ENCODE measurements at regions of chr12 and their contacts with region 1.

Region 1: GRCh38 chr12:11836282-11837151 is 187.0 kb downstream of the ETV6 start:
- DNase-seq: peak; percentile 93
- ATAC-seq: peak; percentile 96
- H3K4me3 ChIP-seq: peak overlapping the region in 2 of 5 experiments; percentile 6 to 37
- H3K4me3 Mint-ChIP-seq: peak overlapping the region; percentile 64
- H3K27ac ChIP-seq: peak overlapping the region; percentile 74 to 77
- H3K27ac Mint-ChIP-seq: peak overlapping the region; percentile 92
- H3K4me1 ChIP-seq: peaks cover 37 to 53% of the 10 kb centered on the region in 2 donors
- H3K4me1 Mint-ChIP-seq: peaks cover 67% of the 10 kb centered on the region
- H3K27me3 ChIP-seq: no peaks in the 10 kb centered on the region
- H3K27me3 Mint-ChIP-seq: no peaks in the 10 kb centered on the region
- CTCF ChIP-seq: no peak

Region 2: GRCh38 chr12:11746024-11746771 is 90.3 kb before region 1 on chr12:
- CTCF ChIA-PET with region 1: no interaction called
- POLR2A ChIA-PET with region 1: interaction called, 3 read pairs
- intact Hi-C with region 1: loop called (anchors 1 kb)
- DNase-seq: peak; percentile 84
- ATAC-seq: peak; percentile 67
- H3K4me3 ChIP-seq: peak overlapping the region in 2 of 5 experiments; percentile 3 to 13
- H3K4me3 Mint-ChIP-seq: peak overlapping the region; percentile 68
- H3K27ac ChIP-seq: peak overlapping the region; percentile 19 to 71
- H3K27ac Mint-ChIP-seq: peak overlapping the region; percentile 89
- H3K4me1 ChIP-seq: peaks cover 65 to 80% of the 10 kb centered on the region in 2 donors
- H3K4me1 Mint-ChIP-seq: peaks cover 83% of the 10 kb centered on the region
- H3K27me3 ChIP-seq: no peaks in the 10 kb centered on the region
- H3K27me3 Mint-ChIP-seq: no peaks in the 10 kb centered on the region
- CTCF ChIP-seq: no peak

Region 3: DNA sequence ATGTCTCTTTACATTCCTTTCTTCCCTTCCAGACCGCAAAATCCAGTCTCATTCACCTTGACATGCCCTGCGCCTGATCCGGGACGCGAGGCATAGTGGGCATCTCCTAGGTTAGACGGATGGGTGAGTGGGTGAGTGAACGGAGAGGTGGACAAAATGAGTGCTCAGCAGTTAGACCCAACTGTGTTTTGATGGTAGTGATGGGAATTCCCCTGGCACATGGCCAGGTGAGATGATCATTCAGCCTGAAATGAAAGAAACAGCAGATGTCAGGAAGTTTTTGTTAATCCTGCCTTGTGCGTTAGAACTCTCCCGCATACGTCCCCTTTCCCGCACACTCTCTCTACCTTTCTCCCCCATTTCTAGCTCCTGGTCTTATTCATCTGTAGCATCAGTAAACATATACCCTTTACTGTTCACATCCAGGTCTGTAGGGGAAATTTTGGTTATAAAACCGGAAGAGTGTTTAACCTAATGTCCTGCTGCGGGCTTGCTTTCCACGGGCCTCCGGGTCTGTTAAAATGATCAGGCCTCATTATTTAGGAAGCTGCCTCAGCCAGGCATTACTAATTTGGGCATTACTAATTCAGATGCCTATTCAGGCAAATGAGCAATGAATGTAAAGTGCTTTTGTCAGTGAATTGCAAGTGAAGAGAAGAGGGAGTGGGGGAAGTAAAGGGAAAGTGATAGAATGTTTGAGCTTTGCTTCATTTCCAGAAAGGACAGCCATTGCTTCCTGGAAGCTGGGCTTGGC is 14.3 kb before region 1 on chr12:
- CTCF ChIA-PET with region 1: interaction called, 4 read pairs
- POLR2A ChIA-PET with region 1: no interaction called
- intact Hi-C with region 1: loop called (anchors 1 kb)
- DNase-seq: peak; percentile 87
- ATAC-seq: peak; percentile 74
- H3K4me3 ChIP-seq: peak overlapping the region in 3 of 5 experiments; percentile 26 to 45 (median 44)
- H3K4me3 Mint-ChIP-seq: peak overlapping the region; percentile 82
- H3K27ac ChIP-seq: peak overlapping the region; percentile 60 to 84
- H3K27ac Mint-ChIP-seq: peak overlapping the region; percentile 92
- H3K4me1 ChIP-seq: peaks cover 35 to 40% of the 10 kb centered on the region in 2 donors
- H3K4me1 Mint-ChIP-seq: peaks cover 48% of the 10 kb centered on the region
- H3K27me3 ChIP-seq: no peaks in the 10 kb centered on the region
- H3K27me3 Mint-ChIP-seq: no peaks in the 10 kb centered on the region
- CTCF ChIP-seq: no peak

Region 4: DNA sequence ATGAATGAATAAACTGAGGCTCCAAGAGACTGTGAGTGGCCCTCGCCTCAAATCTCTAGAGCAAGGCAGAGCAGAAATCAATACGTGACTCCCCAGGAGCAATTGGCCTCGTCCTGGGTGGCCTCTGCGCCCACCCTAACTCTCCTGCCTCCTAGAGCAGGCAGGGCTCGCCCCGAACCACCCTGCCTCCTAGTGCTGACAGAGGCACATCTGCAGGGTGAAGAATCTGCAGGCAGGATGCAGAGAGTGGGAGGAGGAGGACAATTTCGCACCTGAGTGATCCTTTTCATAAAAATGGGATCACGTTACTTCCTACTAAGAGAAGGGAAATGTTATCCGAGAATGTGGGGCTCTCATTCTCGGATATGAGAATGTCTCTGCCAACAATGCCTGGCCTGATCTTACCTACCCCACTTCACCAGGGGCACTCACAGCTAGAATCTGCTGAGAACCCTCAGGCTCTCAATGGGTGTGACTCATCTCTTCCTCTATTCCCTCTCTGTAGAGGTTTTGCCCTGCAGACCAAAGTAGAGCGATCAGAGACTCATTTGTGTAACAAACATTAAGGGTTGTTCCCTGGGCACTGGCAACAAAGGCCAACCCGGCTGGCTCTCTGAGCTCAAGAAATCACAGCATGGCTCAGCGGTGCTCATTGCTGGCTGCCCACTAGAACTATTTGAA is 172.6 kb after region 1 on chr12:
- CTCF ChIA-PET with region 1: no interaction called
- POLR2A ChIA-PET with region 1: no interaction called
- intact Hi-C with region 1: loop called (anchors 1 kb)
- DNase-seq: peak; percentile 26
- ATAC-seq: peak; percentile 59
- H3K4me3 ChIP-seq: no peak overlapping the region
- H3K4me3 Mint-ChIP-seq: peak overlapping the region; percentile 39
- H3K27ac ChIP-seq: no peak overlapping the region
- H3K27ac Mint-ChIP-seq: peak overlapping the region; percentile 73
- H3K4me1 ChIP-seq: peaks cover 46 to 48% of the 10 kb centered on the region in 2 donors
- H3K4me1 Mint-ChIP-seq: peaks cover 61% of the 10 kb centered on the region
- H3K27me3 ChIP-seq: no peaks in the 10 kb centered on the region
- H3K27me3 Mint-ChIP-seq: no peaks in the 10 kb centered on the region
- CTCF ChIP-seq: no peak